ENCODE measurements at regions of chr21 and their contacts with region 1.

Region 1: GRCh38 chr21:32569261-32570230 is 15.8 kb downstream of the TCP10L start:
- DNase-seq: peak; percentile 72
- H3K4me3 ChIP-seq: peak overlapping the region; percentile 69
- H3K27ac ChIP-seq: peak overlapping the region; percentile 81
- H3K4me1 ChIP-seq: peaks cover 18% of the 10 kb centered on the region
- H3K27me3 ChIP-seq: no peaks in the 10 kb centered on the region
- CTCF ChIP-seq: peak; percentile 87

Region 2: GRCh38 chr21:32336711-32337110 is 232.8 kb before region 1 on chr21:
- intact Hi-C with region 1: no loop called
- DNase-seq: no peak
- H3K4me3 ChIP-seq: no peak overlapping the region
- H3K27ac ChIP-seq: peak overlapping the region; percentile 9
- H3K4me1 ChIP-seq: no peaks in the 10 kb centered on the region
- H3K27me3 ChIP-seq: no peaks in the 10 kb centered on the region
- CTCF ChIP-seq: no peak

Region 3: DNA sequence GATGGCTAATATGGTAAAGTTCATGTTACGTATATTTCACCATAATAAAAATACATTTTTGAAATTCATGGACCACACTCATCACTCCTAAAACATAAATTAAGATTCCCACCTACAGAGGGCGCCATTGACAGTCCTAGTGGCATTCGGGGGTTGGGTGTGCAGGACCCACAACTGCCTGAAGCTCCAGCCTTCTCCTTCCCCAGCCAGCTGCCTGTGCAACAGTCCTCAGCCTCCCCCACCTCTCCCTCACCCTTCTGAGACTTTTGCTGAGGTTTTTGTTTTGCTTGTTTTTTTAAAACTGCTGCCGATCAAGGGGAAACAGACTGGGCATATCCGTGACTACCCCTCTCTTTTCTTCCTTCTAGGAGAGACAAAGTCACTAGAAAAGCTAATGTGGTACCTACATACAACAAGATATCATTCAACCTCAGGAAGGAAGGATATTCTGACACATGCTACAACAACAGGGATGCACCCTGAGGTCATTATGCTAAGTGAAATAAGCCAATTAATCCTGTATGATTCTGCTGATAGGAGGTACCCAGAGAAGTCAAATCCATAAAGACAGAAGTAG is 166.3 kb before region 1 on chr21:
- intact Hi-C with region 1: loop called (anchors 5 kb)
- DNase-seq: peak; percentile 50
- H3K4me3 ChIP-seq: no peak overlapping the region
- H3K27ac ChIP-seq: peak overlapping the region; percentile 36
- H3K4me1 ChIP-seq: peaks cover 27% of the 10 kb centered on the region
- H3K27me3 ChIP-seq: no peaks in the 10 kb centered on the region
- CTCF ChIP-seq: peak; percentile 82

Region 4: DNA sequence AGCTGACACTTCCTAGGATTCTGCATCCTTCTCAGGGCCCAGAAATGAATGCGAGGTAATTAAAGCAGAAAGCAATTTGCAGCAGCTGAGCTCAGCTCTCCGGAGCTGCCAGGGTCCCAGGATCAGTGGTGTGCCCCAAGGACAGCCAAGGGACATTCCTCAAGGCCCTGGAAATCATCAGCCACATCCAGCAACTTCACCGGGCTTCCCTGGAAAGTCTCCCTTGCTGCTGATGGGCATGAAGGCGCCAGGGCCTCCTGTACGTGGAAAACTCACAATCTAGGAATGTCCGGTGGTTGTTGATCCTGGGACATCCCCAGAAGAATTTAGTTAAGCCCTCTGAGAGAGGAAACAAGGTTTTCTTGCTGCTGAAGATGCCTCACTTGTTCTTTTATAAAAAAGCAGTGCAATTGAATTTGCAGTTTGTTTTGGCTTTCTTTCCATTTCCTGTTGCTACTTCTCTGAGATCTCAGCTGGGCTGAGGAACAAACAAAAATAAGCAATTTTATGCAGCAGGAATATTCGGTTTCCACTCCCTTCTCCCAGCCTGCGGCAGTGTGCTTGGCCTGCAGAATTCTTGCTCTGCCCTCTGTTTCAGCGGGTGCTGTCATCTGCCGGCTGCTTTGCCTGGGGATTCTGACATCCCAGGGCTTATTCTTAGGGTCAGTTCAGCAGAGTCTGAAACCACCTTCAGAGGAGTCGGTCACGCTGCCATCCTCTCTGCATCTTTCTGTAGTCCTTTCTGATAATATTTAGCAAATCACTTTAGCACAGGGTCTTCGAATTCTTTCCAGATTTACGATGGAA is 70.1 kb before region 1 on chr21:
- intact Hi-C with region 1: loop called (anchors 10 kb)
- DNase-seq: no peak
- H3K4me3 ChIP-seq: peak overlapping the region; percentile 26
- H3K27ac ChIP-seq: peak overlapping the region; percentile 84
- H3K4me1 ChIP-seq: peaks cover 53% of the 10 kb centered on the region
- H3K27me3 ChIP-seq: no peaks in the 10 kb centered on the region
- CTCF ChIP-seq: no peak

Measured in left ventricle myocardium inferior (tissue), 1 donor.